HepG2 (cell line): ENCODE measurements at regions of chr18 and their contacts with region 1.

Region 1: DNA sequence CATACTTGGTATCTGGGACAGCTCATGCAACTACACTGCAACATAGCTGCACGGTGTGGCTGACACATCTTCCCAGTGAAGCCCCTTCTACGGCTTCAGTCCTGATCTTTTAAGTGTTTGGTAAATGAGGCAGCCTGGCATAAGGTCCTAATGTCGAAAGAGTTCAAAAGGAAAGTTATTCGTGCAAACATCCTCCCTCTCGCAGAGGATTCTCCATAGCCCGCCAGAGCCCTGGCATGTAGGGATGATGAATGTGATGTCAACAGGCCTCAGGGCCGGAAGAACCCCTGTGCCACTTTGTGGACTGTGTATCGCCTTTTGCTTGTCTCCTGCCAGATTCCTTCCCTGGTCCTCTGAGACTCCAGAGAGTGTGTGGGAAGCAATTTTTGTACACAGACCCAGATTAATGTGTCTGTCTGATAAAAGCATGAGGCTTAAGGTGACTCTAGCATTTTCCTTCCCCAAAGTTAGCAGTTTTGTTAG is 88.5 kb downstream of the SOCS6 start:
- DNase-seq: peak; percentile 93
- ATAC-seq: peak; percentile 62
- H3K4me3 ChIP-seq: peak overlapping the region; percentile 32 to 47 (median 34); a peak in 5 of 6 replicates
- H3K27ac ChIP-seq: peak overlapping the region; percentile 99
- H3K4me1 ChIP-seq: peaks cover 95% of the 10 kb centered on the region
- H3K27me3 ChIP-seq: no peaks in the 10 kb centered on the region
- CTCF ChIP-seq: no peak
- EP300 ChIP-seq: peak in 1 of 2 experiments; percentile 83; a peak in 2 of 4 replicates
- POLR2A ChIP-seq: peak in 1 of 2 experiments; percentile 28; a peak in 1 of 4 replicates
- RAD21 ChIP-seq: no peak

Region 2: DNA sequence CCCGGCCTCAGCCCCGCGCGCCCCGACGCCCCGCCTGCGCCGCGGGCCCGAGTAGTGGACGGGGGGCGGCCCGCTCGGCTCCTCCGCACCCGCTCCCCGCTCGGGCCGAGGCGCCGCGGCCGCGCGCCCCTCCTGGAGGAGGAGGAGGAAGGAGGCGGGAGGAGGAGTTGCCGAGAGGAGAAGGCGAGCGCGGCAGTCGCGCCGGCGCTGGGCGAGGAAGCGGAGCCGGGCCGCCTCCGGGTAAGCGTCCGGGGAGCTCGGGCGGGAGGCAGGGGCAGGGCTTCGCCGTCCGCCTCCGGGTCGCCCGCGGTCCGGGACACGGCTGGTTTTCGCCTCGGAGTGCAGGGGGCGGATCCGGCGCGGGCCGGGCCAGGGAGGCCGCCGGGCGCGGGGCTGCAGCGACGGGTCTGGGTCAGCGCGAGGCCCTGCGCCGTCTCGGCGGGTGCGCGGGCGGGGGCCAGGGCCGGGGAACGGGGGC is 88.5 kb before region 1 on chr18 and contains the start of gene SOCS6:
- CTCF ChIA-PET with region 1: no interaction called
- POLR2A ChIA-PET with region 1: interaction called, 3 read pairs
- in situ Hi-C with region 1: no loop called
- intact Hi-C with region 1: loop called (anchors 2 kb)
- DNase-seq: no peak
- ATAC-seq: peak; percentile 65
- H3K4me3 ChIP-seq: peak within 1 kb of the TSS; percentile 91 to 95 (median 95)
- H3K27ac ChIP-seq: peak within 1 kb of the TSS; percentile 91
- H3K4me1 ChIP-seq: peaks cover 42% of the 10 kb centered on the region
- H3K27me3 ChIP-seq: no peaks in the 10 kb centered on the region; a peak in 1 of 5 replicates
- CTCF ChIP-seq: no peak
- EP300 ChIP-seq: no peak
- POLR2A ChIP-seq: peak in 1 of 2 experiments; percentile 50
- RAD21 ChIP-seq: peak; percentile 10; the same call in 1 of the 2 replicates
- total RNA-seq, gene SOCS6: 38.3 and 49.0 TPM in 2 replicates

Region 3: GRCh38 chr18:70337139-70337972 is 40.0 kb before region 1 on chr18:
- CTCF ChIA-PET with region 1: no interaction called
- POLR2A ChIA-PET with region 1: interaction called, 110 read pairs
- in situ Hi-C with region 1: loop called (anchors 5 kb)
- intact Hi-C with region 1: loop called (anchors 1 kb)
- DNase-seq: peak; percentile 81
- ATAC-seq: peak; percentile 41
- H3K4me3 ChIP-seq: peak overlapping the region in 2 of 3 experiments; percentile 20 to 59; a peak in 3 of 6 replicates
- H3K27ac ChIP-seq: peak overlapping the region; percentile 97
- H3K4me1 ChIP-seq: peaks cover 76% of the 10 kb centered on the region
- H3K27me3 ChIP-seq: no peaks in the 10 kb centered on the region
- CTCF ChIP-seq: no peak
- EP300 ChIP-seq: peak in 1 of 2 experiments; percentile 52; a peak in 1 of 4 replicates
- POLR2A ChIP-seq: peak in 1 of 2 experiments; percentile 27; a peak in 1 of 4 replicates
- RAD21 ChIP-seq: no peak

Region 4: GRCh38 chr18:70363861-70364260 is 13.5 kb before region 1 on chr18:
- CTCF ChIA-PET with region 1: no interaction called
- POLR2A ChIA-PET with region 1: interaction called, 17 read pairs
- in situ Hi-C with region 1: no loop called
- intact Hi-C with region 1: no loop called
- DNase-seq: peak; percentile 48
- ATAC-seq: no peak
- H3K4me3 ChIP-seq: no peak overlapping the region
- H3K27ac ChIP-seq: peak overlapping the region; percentile 5
- H3K4me1 ChIP-seq: peaks cover 56% of the 10 kb centered on the region
- H3K27me3 ChIP-seq: no peaks in the 10 kb centered on the region
- CTCF ChIP-seq: no peak
- EP300 ChIP-seq: no peak
- POLR2A ChIP-seq: no peak
- RAD21 ChIP-seq: no peak

Region 5: DNA sequence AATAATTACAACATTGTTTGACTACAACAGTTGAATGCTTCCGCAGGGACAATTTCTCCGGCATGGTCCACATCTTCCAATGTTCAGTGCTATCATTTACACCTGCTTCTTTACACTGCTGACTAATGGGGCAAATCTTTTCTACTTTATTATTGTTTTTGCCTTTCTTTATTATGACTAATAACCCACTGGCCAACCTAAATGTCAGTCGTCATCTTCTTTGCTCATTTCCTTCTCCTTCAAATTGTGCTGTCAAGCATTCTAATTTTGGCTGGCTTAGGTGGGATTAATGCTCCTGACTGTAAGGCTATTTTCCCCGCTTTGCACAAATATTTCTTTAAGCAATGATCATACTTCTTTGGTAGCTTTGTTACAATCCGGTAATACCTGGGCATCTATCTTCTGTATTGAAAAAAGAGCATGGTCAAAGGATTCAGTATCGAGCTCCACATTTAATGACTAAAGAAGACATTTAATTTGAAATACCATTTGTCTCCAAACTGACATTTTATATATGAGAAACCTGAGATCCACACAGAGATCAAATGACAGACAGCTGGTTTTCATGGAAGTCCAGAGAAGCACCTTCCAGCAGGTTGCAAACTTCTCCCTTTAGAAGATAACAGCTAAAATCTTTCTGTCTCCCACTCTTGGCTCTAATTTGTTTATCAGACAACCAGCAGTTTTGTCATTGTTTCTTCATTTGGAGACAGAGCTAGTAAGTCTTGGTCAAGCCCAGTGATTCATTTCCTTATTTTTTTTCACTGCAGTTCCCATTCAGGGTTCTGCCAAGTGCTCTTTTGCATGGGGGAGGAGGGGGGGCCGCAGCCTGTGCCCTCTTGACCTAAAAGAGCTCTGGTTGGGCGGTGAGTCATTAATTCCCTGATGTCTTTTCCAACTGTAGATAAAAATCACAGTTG is 44.4 kb after region 1 on chr18:
- CTCF ChIA-PET with region 1: no interaction called
- POLR2A ChIA-PET with region 1: interaction called, 13 read pairs
- in situ Hi-C with region 1: no loop called
- intact Hi-C with region 1: loop called (anchors 5 kb)
- DNase-seq: peak; percentile 35
- ATAC-seq: no peak
- H3K4me3 ChIP-seq: no peak overlapping the region
- H3K27ac ChIP-seq: no peak overlapping the region
- H3K4me1 ChIP-seq: peaks cover 54% of the 10 kb centered on the region
- H3K27me3 ChIP-seq: no peaks in the 10 kb centered on the region
- CTCF ChIP-seq: no peak
- EP300 ChIP-seq: peak in 1 of 2 experiments; percentile 36; a peak in 1 of 4 replicates
- POLR2A ChIP-seq: no peak
- RAD21 ChIP-seq: no peak